Calu3 (cell line): ENCODE measurements at regions of chr11 and their contacts with region 1.

Region 1: GRCh38 chr11:102109896-102110760 is at the start of gene YAP1:
- DNase-seq: peak; percentile 85
- H3K4me3 Mint-ChIP-seq: peak within 1 kb of the TSS; percentile 99
- H3K27ac Mint-ChIP-seq: peak within 1 kb of the TSS; percentile 99
- H3K4me1 Mint-ChIP-seq: peaks cover 7% of the 10 kb centered on the region
- H3K27me3 Mint-ChIP-seq: no peaks in the 10 kb centered on the region
- CTCF ChIP-seq: no peak
- total RNA-seq, gene YAP1: 57.5 and 64.7 TPM in 2 replicates

Region 2: DNA sequence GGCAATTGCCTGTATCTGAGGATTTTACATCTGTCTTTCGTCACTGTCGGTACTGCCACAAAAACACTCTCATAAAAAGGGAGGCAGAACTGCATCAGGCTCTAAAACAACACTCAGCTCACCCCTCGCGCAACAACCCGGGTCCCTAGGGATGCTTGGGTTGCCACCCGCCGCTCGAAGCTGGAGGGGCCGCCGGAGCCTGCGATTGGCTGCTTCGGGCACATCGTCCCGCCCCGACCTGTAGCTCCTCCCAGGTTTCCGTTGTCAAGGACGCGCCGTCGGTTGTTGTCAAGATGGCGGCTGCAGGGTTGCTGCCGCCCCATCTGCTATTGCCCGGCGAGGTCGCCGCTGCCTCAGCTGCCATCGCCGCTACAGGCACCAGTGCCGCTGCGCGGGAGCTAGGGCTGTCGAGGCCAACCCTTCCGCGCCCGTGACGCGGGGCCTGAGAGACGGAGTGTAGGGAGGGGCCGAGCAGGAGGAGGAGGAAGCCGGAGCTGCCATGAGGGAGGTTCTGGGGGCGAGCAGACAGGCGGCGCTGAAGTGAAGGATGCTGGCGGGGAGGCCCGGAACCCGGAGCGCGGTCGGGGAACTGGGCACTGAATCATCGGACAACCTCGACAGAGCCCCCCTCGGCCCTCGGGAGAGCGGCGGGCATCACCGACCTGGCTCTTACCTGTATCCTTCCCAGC is 195.2 kb before region 1 on chr11 and contains the start of gene CEP126:
- CTCF ChIA-PET with region 1: no interaction called
- intact Hi-C with region 1: loop called (anchors 5 kb)
- DNase-seq: peak; percentile 89
- H3K4me3 Mint-ChIP-seq: peak within 1 kb of the TSS; percentile 100
- H3K27ac Mint-ChIP-seq: peak within 1 kb of the TSS; percentile 96
- H3K4me1 Mint-ChIP-seq: peaks cover 21% of the 10 kb centered on the region
- H3K27me3 Mint-ChIP-seq: no peaks in the 10 kb centered on the region
- CTCF ChIP-seq: no peak
- total RNA-seq, gene CEP126: 3.1 and 3.8 TPM in 2 replicates

Region 3: GRCh38 chr11:102064316-102064715 is 45.8 kb before region 1 on chr11:
- CTCF ChIA-PET with region 1: no interaction called
- intact Hi-C with region 1: no loop called
- DNase-seq: no peak
- H3K4me3 Mint-ChIP-seq: no peak overlapping the region
- H3K27ac Mint-ChIP-seq: no peak overlapping the region
- H3K4me1 Mint-ChIP-seq: no peaks in the 10 kb centered on the region
- H3K27me3 Mint-ChIP-seq: no peaks in the 10 kb centered on the region
- CTCF ChIP-seq: no peak

Region 4: DNA sequence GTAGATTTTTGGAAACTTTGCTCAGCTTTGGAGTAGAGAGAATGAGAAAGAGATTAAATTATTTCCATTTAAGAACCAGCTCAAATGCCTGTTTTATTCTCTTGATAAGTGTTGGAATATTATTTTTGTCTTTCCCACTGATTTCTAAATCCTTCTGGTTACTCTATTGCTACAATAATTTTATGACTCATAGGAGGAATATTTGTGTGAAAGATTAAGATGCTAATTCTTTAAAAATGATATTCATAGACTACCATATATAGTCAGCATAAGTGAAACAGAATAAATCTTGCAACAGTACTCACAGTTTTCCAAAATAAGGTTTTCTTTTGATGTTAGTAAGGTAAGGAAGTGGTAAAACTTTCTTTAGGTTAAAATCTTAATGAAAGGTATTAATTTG is 61.0 kb after region 1 on chr11:
- CTCF ChIA-PET with region 1: interaction called, 3 read pairs
- intact Hi-C with region 1: loop called (anchors 2 kb)
- DNase-seq: no peak
- H3K4me3 Mint-ChIP-seq: no peak overlapping the region
- H3K27ac Mint-ChIP-seq: peak overlapping the region; percentile 58
- H3K4me1 Mint-ChIP-seq: peaks cover 42% of the 10 kb centered on the region
- H3K27me3 Mint-ChIP-seq: no peaks in the 10 kb centered on the region
- CTCF ChIP-seq: no peak

Region 5: DNA sequence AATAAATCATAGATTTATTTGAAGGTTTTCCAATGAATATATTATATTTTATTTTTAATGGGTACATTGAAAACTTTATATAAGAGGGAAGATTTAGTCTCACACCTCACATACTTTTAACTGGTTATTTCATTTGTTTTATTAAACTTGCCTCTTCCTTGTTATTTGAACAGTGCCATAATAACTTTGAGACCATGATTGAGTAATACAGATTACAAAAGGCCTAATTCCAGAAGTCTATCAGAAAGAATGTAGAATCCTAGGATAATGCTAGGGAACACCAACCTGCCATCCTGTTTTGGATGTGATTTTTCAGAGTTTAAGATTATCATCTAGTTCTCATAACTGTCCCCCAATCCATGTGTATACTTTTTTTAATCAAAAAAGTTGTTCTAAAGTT is 104.5 kb after region 1 on chr11:
- CTCF ChIA-PET with region 1: no interaction called
- intact Hi-C with region 1: no loop called
- DNase-seq: no peak
- H3K4me3 Mint-ChIP-seq: no peak overlapping the region
- H3K27ac Mint-ChIP-seq: no peak overlapping the region
- H3K4me1 Mint-ChIP-seq: no peaks in the 10 kb centered on the region
- H3K27me3 Mint-ChIP-seq: no peaks in the 10 kb centered on the region
- CTCF ChIP-seq: no peak

Region 6: DNA sequence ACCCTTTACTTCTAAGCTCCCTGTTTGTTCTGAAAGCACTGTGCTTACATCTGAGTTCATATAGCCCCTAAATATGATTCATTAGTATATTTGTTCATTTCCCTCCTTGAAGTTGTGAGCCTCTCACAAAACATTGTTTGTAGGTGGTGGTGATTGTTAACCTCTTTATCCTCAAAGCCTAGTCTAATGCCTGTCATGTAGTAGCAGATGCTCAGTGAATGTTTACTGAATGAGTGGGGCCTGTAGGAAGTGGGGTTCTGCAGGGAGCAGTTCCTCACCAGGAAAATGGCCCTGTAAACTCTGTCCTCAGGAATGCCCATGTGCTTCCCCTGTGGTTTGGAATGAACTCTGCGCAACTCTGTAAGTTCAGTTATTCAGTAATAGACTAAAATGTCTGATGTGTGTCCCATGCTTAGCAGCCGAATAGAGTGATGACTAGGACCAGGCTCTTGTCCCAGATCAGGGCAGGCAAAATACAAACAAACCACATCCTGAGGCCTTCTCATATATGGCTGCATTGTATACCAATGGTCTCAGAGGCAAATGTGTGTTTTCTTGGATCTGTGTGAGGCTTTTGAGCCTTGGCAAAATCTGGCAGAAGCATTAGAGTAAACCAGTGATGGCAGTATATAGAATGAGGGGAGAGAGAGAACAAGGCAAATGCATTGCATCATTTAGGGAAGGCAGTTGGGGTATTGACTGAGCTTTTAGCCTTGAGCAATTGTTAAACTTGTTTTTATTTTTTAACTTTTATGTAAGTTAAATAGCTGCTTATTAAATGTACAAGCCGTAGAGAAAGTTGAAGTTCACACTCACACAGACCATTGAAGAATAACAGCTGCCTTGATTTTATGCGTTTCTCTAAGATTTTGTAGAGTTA is 115.8 kb after region 1 on chr11:
- CTCF ChIA-PET with region 1: no interaction called
- intact Hi-C with region 1: loop called (anchors 5 kb)
- DNase-seq: peak; percentile 24
- H3K4me3 Mint-ChIP-seq: peak overlapping the region; percentile 53
- H3K27ac Mint-ChIP-seq: peak overlapping the region; percentile 94
- H3K4me1 Mint-ChIP-seq: peaks cover 40% of the 10 kb centered on the region
- H3K27me3 Mint-ChIP-seq: no peaks in the 10 kb centered on the region
- CTCF ChIP-seq: no peak